ENCODE measurements at regions of chr4 and their contacts with region 1.

Region 1: DNA sequence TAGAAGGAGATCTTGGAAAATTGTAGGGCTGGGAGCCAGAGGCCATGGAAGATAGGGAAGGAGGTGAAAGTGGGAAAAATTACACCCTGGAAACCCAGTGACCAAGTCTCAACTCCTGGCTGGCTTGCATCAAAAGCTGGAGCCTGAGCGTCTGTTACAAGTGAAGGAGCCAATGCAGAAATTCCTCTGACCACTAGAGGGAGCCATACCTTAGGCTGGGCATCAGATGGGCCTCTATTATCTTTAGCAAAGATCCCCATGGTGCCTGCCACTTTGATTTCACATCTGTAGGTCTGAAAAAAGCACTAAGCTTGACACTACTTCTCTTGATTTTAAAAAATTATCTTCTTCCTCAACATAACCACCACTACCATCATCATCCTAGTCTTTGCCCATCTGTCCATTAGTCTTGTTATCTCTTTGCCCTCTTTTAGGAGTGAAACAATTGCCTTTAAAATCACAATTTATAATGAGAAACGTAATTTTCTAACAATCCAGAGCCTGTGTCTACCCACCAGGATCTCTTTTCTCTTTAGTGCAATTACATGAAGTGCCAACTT is 62.9 kb downstream of the ANAPC4 start:
- DNase-seq: peak in 1 of 3 donors; percentile 86
- ATAC-seq: peak; percentile 87
- H3K4me3 ChIP-seq: no peak overlapping the region
- H3K4me1 ChIP-seq: no peaks in the 10 kb centered on the region
- CTCF ChIP-seq: peak; percentile 76

Region 2: DNA sequence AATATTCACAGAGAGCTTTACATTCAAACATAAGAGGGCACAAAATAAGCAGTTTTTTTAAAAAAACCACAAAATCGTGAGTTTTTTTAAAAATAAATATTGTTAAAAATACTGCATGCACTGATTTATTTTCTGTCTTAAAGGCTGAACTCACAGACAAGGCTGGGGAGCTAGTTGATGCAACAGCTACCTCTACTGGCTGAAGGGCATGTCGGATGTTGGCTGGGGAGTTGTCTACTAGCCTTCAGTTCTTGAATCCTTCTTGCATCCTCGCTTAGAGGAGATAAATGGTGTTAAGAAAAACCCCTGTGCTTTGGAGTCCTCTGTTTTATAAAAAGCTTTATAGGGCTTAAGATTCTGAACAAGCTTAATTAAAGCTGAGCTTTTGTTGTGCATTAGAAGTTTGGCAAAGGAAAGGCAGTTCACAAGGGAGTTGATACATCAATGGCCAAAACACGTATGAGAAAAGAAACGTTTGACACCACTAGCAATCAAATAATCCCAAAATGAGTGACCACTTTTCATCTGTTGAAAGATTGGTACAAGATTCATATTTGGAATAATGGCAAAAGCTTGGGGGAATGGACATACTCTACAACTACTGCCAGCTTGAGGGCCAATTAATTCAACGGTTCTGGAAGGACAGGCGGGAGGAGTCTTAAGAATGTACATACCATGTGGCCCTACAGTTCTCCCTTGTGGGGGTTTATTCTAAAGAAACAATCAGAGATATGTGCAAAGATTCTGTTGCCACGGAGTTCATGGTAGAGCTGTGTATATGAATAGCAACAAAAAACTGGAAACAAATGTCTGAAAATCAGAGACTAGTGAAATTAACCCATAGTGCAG is 328.1 kb after region 1 on chr4:
- intact Hi-C with region 1: loop called in 1 of 2 experiments (anchors 5 kb)
- DNase-seq: peak in 2 of 3 donors; percentile 42 to 64
- ATAC-seq: peak; percentile 72
- H3K4me3 ChIP-seq: no peak overlapping the region
- H3K4me1 ChIP-seq: no peaks in the 10 kb centered on the region
- CTCF ChIP-seq: peak; percentile 16